ENCODE measurements at regions of chr9 and their contacts with region 1.

Region 1: DNA sequence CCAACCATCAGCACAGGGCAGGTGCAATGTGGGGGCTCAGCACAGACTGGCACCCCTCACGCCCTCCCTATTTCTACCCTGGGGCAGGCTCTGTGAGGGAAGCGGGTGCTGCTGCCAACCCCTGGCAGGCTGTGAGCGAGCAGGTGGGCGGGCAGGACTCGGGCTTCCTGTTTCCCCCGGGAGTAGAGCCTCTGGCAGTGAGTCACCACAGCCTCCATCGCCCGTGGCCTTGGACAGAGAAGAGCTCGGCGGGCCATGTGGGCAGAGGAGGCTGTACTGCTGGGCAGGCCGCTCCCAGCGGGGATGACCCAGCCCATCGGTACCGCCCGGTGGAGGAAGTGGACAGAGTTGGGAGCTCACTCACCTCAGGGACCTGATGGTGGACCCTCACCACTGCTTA is 16.6 kb downstream of the KCNT1 start:
- DNase-seq: no peak
- ATAC-seq: no peak
- H3K4me3 ChIP-seq: no peak overlapping the region
- H3K27ac ChIP-seq: no peak overlapping the region
- H3K4me1 ChIP-seq: no peaks in the 10 kb centered on the region
- H3K27me3 ChIP-seq: no peaks in the 10 kb centered on the region

Region 2: DNA sequence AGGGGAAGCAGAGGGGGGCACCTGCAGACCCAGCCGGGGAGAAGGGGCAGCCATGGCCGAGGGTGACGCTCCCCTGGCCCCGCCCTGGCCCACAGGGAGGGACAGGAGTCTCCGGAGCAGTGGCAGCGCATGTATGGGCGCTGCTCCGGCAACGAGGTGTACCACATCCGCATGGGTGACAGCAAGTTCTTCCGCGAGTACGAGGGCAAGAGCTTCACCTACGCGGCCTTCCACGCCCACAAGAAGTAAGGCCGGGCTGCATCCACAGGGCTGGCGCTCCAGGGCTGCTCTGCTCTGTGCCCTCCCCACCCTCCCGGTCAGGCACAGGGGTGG is 51.6 kb after region 1 on chr9:
- intact Hi-C with region 1: loop called in 1 of 2 experiments (anchors 10 kb)
- DNase-seq: no peak
- ATAC-seq: no peak
- H3K4me3 ChIP-seq: no peak overlapping the region
- H3K27ac ChIP-seq: no peak overlapping the region
- H3K4me1 ChIP-seq: no peaks in the 10 kb centered on the region
- H3K27me3 ChIP-seq: no peaks in the 10 kb centered on the region

Region 3: DNA sequence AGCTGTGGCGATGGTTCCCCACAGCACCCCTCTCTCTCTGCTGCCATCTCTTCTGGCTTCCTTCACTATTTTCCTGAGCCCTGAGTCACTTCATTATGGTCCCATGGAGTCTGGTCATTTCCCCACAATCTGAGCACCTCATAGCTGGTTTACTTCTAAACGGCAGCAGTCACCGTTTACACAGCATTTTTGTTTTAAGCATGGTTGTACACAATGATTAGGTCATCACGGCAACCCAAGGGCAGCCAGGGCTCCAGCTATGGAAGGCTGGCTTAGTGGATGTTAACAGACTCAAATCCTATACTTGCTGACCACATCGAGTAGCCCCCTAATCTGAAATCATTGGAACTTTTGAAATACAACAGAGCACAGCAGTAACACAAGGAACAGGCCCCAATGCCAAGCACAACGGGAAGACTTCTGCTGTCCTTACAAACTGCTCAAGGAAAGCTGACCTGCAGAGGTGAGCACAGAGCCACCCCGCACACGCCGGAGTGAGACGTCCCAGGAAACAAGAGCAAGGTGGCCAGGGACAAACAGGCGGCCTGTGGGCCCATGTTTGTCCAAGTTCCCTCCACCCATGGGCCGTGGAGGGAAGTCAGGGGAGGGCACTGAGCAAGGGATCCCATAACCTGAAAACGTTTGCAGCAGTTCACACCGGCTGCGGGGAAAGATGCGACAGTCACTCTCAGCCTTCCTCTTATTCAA is 165.9 kb after region 1 on chr9:
- intact Hi-C with region 1: no loop called
- DNase-seq: no peak
- ATAC-seq: no peak
- H3K4me3 ChIP-seq: no peak overlapping the region
- H3K27ac ChIP-seq: no peak overlapping the region
- H3K4me1 ChIP-seq: peaks cover 0 to 2% of the 10 kb centered on the region in 2 donors
- H3K27me3 ChIP-seq: no peaks in the 10 kb centered on the region